Activated T-helper 2 cell treated with anti-CD3 and anti-CD28 coated beads, Interferon-gamma antibody, Interleukin-2, Interleukin-4, amounts not matched to agents 10 μg/mL and 5 μg/mL and 100 μg/mL, durations not matched to agents 14 hours and 24 hours and 36 hours (primary cell): ENCODE measurements at regions of chr3 and their contacts with region 1.

Region 1: GRCh38 chr3:125916376-125916978 is 52.5 kb upstream of the ROPN1B start:
- DNase-seq: peak; percentile 94
- H3K4me3 Mint-ChIP-seq: peak overlapping the region; percentile 76
- H3K27ac Mint-ChIP-seq: peak overlapping the region; percentile 75
- H3K4me1 Mint-ChIP-seq: peaks cover 22% of the 10 kb centered on the region
- H3K27me3 Mint-ChIP-seq: peaks cover 2% of the 10 kb centered on the region

Region 2: DNA sequence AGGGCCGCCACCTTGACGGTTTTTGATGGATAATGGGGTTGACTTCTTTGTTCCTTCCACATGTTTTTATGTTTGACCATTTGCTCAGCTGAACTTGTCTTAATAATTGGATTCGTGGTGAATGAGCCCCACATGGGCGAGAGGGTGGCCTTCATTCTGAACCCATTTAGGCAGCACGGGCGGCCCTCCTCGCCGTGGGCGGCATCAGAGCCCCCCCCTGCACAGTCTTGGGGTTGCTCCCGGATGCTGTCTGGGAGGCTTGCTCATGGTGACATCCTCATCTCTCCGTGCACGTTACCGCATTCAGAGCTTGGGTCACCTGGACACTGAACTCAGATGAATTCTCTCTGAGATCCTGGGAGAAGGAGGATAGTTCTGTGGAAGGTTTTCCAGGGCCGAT is 148.8 kb before region 1 on chr3:
- intact Hi-C with region 1: loop called (anchors 10 kb)
- DNase-seq: no peak
- H3K4me3 Mint-ChIP-seq: peak overlapping the region; percentile 68
- H3K27ac Mint-ChIP-seq: no peak overlapping the region
- H3K4me1 Mint-ChIP-seq: peaks cover 9% of the 10 kb centered on the region
- H3K27me3 Mint-ChIP-seq: peaks cover 29% of the 10 kb centered on the region

Region 3: DNA sequence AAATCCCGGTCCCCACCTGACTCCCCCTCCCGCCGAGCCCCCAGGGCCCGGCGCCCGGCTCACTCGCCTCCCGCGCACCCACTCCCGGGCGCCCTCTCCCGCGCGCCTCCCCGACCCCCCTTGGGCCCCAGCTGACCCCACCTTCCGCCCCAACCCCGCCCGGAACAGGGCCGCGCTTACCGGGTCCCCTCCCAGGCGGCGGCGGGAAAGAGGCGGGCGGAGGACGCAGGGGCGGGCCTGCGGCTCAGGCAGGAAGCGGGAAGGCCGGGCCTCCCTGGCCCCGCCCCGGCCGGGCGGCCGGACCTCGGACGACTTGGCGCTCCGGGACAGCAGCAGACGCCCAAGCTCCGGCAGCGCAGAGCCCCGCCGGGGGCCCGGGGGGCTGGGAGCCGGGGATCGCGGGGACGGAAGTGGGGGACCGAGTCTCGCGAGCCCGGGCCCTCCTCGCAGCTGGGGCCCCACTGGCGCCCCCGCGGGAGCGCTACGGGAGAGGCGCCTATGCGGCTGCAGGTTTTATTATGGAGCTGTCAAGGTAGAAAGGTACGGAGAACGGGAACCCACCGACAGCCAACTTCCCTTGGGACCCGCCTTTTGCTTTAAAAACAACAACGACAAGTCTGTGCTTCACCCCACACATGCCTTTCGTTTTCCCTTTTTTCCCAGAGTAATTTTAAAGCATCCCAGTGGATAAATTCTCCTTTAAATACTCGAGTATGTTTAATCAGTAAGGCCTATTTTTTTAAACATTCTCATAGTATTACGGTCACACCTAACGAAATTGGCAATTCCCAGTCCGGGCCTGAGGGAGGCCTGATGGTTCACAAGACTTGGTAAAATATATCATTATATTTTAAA is 167.7 kb after region 1 on chr3 and contains the start of gene SLC41A3:
- intact Hi-C with region 1: loop called (anchors 1 kb)
- DNase-seq: peak; percentile 86
- H3K4me3 Mint-ChIP-seq: peak within 1 kb of the TSS; percentile 92
- H3K27ac Mint-ChIP-seq: peak within 1 kb of the TSS; percentile 82
- H3K4me1 Mint-ChIP-seq: peaks cover 14% of the 10 kb centered on the region
- H3K27me3 Mint-ChIP-seq: no peaks in the 10 kb centered on the region
- total RNA-seq, gene SLC41A3: 13.1 and 14.7 TPM in 2 replicates

Region 4: DNA sequence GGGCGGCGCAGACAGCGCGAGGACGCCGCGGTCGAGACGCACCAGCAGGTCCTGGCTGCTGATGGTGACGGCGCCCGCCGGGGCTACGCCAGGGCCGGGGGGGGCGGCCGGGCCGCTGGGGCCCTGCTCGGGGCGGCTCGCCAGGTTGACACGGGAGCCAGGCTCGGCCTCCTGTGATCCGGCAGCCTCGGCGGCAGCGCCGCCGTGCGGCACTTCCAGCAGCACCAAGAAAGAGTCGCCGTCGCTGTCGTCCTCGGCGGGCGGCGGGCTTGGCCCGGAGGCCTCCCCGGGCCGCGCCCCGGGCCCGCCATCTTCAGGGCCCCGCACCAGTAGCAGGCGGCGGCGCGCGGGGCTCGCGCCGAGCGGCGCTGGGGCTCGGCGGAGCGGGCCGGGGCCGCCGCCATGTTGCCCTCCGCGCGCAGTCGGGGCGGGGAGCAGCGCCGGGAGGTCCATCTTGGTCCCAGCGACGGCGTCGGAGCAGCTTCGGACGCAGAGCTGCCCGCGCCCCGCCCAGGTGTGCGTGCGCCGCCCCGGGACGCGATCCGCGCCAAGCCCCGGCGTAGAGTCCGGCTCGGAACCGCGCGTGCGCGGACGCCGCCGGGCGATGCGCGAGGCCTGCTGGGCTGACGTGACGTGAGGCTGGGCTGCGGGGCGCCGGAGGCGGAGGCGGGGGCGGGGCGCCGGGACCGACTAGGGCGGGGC is 559.1 kb after region 1 on chr3 and contains the start of gene ZXDC:
- intact Hi-C with region 1: loop called (anchors 1 kb)
- DNase-seq: peak; percentile 90
- H3K4me3 Mint-ChIP-seq: peak within 1 kb of the TSS; percentile 94
- H3K27ac Mint-ChIP-seq: peak within 1 kb of the TSS; percentile 92
- H3K4me1 Mint-ChIP-seq: peaks cover 28% of the 10 kb centered on the region
- H3K27me3 Mint-ChIP-seq: no peaks in the 10 kb centered on the region
- total RNA-seq, gene ZXDC: 26.1 and 27.0 TPM in 2 replicates